ENCODE measurements at regions of chr5 and their contacts with region 1.

Region 1: GRCh38 chr5:173781814-173782670 is 106.1 kb upstream of the CPEB4 start:
- DNase-seq: peak; percentile 94
- ATAC-seq: peak; percentile 81
- H3K4me3 ChIP-seq: no peak overlapping the region
- H3K27ac ChIP-seq: peak overlapping the region; percentile 88
- H3K4me1 ChIP-seq: peaks cover 16% of the 10 kb centered on the region
- H3K27me3 ChIP-seq: no peaks in the 10 kb centered on the region
- CTCF ChIP-seq: no peak
- POLR2A ChIP-seq: 0 out of 2 replicates have a peak, but pooled peaks have one; percentile 19
- RAD21 ChIP-seq: no peak

Region 2: GRCh38 chr5:173764321-173765029 is 17.6 kb before region 1 on chr5:
- CTCF ChIA-PET with region 1: no interaction called
- POLR2A ChIA-PET with region 1: no interaction called
- dilution Hi-C with region 1: no loop called
- in situ Hi-C with region 1: no loop called
- intact Hi-C with region 1: loop called (anchors 1 kb)
- DNase-seq: peak; percentile 96
- ATAC-seq: peak; percentile 99
- H3K4me3 ChIP-seq: no peak overlapping the region
- H3K27ac ChIP-seq: peak overlapping the region; percentile 59
- H3K4me1 ChIP-seq: peaks cover 7% of the 10 kb centered on the region
- H3K27me3 ChIP-seq: no peaks in the 10 kb centered on the region; the same call in 1 of the 2 replicates
- CTCF ChIP-seq: no peak
- POLR2A ChIP-seq: no peak
- RAD21 ChIP-seq: peak; percentile 11; the same call in 1 of the 2 replicates

Region 3: DNA sequence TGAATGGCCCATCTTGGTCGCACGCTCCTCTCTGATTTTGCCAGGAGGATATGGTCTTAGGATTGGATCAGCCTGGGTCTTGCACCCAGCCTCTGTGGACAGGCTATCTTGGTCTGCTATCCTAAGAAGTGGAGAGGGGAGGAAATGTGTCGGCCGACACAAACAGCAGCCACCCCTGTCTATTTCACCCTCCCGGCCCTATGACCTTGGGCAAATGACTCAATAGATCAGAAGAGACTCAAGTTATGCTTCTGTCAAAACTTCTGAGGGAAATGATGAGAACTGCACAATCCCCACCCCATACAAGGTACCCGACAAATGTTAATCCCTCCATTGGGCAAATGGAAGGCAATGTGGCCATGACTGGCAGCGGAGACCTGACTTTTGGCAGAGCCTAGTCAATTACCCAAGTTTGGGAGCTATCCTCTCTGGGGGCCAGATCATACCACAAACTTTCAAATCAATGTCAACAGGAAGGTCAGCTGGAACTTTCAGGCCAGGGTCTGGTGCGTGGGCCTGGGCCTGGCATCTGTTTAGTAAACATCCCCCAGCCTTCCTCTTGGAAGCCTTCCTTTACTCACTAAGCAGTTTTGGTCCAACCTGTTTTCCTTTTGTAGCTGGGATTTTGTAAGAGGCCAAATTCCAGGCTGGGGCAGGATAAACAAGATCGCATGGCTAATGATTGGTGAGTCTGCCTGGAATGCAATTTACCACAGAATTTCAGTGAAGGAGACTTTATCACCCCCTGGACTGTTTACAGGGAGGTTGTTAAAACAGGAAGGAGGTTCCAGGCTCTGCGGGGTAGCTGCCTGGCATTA is 41.9 kb after region 1 on chr5:
- CTCF ChIA-PET with region 1: no interaction called
- POLR2A ChIA-PET with region 1: no interaction called
- dilution Hi-C with region 1: no loop called
- in situ Hi-C with region 1: no loop called
- intact Hi-C with region 1: loop called (anchors 1 kb)
- DNase-seq: peak; percentile 85
- ATAC-seq: peak; percentile 94
- H3K4me3 ChIP-seq: no peak overlapping the region
- H3K27ac ChIP-seq: peak overlapping the region; percentile 20
- H3K4me1 ChIP-seq: peaks cover 11% of the 10 kb centered on the region
- H3K27me3 ChIP-seq: no peaks in the 10 kb centered on the region
- CTCF ChIP-seq: no peak
- POLR2A ChIP-seq: no peak
- RAD21 ChIP-seq: no peak